ENCODE measurements at regions of chr2 and their contacts with region 1.

Region 1: GRCh38 chr2:170155022-170155722 is 22.8 kb upstream of the MYO3B start:
- DNase-seq: no peak
- ATAC-seq: peak; percentile 73
- H3K4me3 ChIP-seq: no peak overlapping the region; the same call in 1 of the 2 replicates
- H3K27ac ChIP-seq: no peak overlapping the region
- H3K4me1 ChIP-seq: peaks cover 54% of the 10 kb centered on the region
- H3K27me3 ChIP-seq: no peaks in the 10 kb centered on the region
- CTCF ChIP-seq: no peak
- EP300 ChIP-seq: peak in 1 of 2 experiments; percentile 75; a peak in 1 of 4 replicates
- POLR2A ChIP-seq: no peak
- RAD21 ChIP-seq: no peak

Region 2: DNA sequence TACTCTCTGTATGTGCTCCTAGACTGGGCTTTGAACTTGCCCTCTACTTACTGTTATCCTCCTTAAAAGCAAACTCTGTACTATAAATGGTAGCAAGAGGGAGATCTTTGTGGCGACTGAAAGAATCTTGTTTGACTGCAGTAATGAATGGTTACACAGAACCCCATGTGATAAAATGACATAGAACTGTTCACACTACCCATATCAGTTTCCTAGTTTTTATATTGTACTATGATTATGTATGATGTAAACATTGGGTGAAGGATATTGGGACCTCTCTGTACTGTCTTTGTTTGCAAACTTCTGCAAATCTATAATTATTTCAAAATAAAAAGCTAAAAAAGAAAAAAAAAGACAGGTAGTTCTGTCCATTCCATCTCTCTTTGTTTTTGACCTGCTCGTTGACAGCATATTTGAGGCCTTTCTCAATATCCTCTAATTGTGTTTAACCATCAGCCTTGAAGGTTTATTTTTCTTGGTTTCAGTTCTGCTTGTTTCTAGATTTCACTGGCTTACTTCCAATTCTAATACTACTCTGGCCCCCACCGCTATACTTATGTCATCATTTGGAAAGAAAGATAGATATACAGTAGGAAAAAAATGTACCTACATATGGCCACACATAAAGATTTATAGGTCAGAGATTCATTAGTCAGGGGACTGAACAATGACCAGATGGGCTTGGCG is 56.4 kb before region 1 on chr2:
- CTCF ChIA-PET with region 1: no interaction called
- POLR2A ChIA-PET with region 1: no interaction called
- RAD21 ChIA-PET with region 1: no interaction called
- SMC1A ChIA-PET with region 1: interaction called, 6 read pairs
- in situ Hi-C with region 1: no loop called
- intact Hi-C with region 1: loop called (anchors 10 kb)
- DNase-seq: no peak
- ATAC-seq: peak; percentile 92
- H3K4me3 ChIP-seq: no peak overlapping the region
- H3K27ac ChIP-seq: no peak overlapping the region
- H3K4me1 ChIP-seq: 0 out of 2 replicates have a peak, but pooled peaks cover 2% of the 10 kb centered on the region
- H3K27me3 ChIP-seq: no peaks in the 10 kb centered on the region
- CTCF ChIP-seq: no peak
- EP300 ChIP-seq: no peak
- POLR2A ChIP-seq: no peak
- RAD21 ChIP-seq: no peak

Region 3: GRCh38 chr2:170170281-170171040 is 15.3 kb after region 1 on chr2:
- CTCF ChIA-PET with region 1: interaction called, 38 read pairs
- POLR2A ChIA-PET with region 1: interaction called, 112 read pairs
- RAD21 ChIA-PET with region 1: interaction called, 124 read pairs
- SMC1A ChIA-PET with region 1: interaction called, 291 read pairs
- in situ Hi-C with region 1: no loop called
- intact Hi-C with region 1: no loop called
- DNase-seq: no peak
- ATAC-seq: no peak
- H3K4me3 ChIP-seq: no peak overlapping the region
- H3K27ac ChIP-seq: no peak overlapping the region
- H3K4me1 ChIP-seq: no peaks in the 10 kb centered on the region
- H3K27me3 ChIP-seq: no peaks in the 10 kb centered on the region
- CTCF ChIP-seq: no peak
- EP300 ChIP-seq: no peak
- POLR2A ChIP-seq: no peak
- RAD21 ChIP-seq: no peak

Region 4: GRCh38 chr2:170212625-170213280 is 57.6 kb after region 1 on chr2:
- CTCF ChIA-PET with region 1: interaction called, 4 read pairs
- POLR2A ChIA-PET with region 1: interaction called, 4 read pairs
- RAD21 ChIA-PET with region 1: interaction called, 9 read pairs
- SMC1A ChIA-PET with region 1: interaction called, 15 read pairs
- in situ Hi-C with region 1: no loop called
- intact Hi-C with region 1: loop called (anchors 2 kb)
- DNase-seq: peak; percentile 64
- ATAC-seq: peak; percentile 72
- H3K4me3 ChIP-seq: peak overlapping the region; percentile 42
- H3K27ac ChIP-seq: peak overlapping the region; percentile 51
- H3K4me1 ChIP-seq: peaks cover 24% of the 10 kb centered on the region
- H3K27me3 ChIP-seq: no peaks in the 10 kb centered on the region
- CTCF ChIP-seq: no peak
- EP300 ChIP-seq: no peak
- POLR2A ChIP-seq: no peak
- RAD21 ChIP-seq: no peak

Region 5: GRCh38 chr2:170298115-170298514 is 142.9 kb after region 1 on chr2:
- CTCF ChIA-PET with region 1: no interaction called
- POLR2A ChIA-PET with region 1: no interaction called
- RAD21 ChIA-PET with region 1: no interaction called
- SMC1A ChIA-PET with region 1: no interaction called
- in situ Hi-C with region 1: no loop called
- intact Hi-C with region 1: no loop called
- DNase-seq: peak; percentile 47
- ATAC-seq: peak; percentile 99
- H3K4me3 ChIP-seq: no peak overlapping the region
- H3K27ac ChIP-seq: no peak overlapping the region
- H3K4me1 ChIP-seq: no peaks in the 10 kb centered on the region
- H3K27me3 ChIP-seq: no peaks in the 10 kb centered on the region
- CTCF ChIP-seq: no peak
- EP300 ChIP-seq: peak in 1 of 2 experiments; percentile 41; a peak in 1 of 4 replicates
- POLR2A ChIP-seq: no peak
- RAD21 ChIP-seq: no peak